Tibial artery (tissue), 4 donors: ENCODE measurements at regions of chr15 and their contacts with region 1.

Region 1: DNA sequence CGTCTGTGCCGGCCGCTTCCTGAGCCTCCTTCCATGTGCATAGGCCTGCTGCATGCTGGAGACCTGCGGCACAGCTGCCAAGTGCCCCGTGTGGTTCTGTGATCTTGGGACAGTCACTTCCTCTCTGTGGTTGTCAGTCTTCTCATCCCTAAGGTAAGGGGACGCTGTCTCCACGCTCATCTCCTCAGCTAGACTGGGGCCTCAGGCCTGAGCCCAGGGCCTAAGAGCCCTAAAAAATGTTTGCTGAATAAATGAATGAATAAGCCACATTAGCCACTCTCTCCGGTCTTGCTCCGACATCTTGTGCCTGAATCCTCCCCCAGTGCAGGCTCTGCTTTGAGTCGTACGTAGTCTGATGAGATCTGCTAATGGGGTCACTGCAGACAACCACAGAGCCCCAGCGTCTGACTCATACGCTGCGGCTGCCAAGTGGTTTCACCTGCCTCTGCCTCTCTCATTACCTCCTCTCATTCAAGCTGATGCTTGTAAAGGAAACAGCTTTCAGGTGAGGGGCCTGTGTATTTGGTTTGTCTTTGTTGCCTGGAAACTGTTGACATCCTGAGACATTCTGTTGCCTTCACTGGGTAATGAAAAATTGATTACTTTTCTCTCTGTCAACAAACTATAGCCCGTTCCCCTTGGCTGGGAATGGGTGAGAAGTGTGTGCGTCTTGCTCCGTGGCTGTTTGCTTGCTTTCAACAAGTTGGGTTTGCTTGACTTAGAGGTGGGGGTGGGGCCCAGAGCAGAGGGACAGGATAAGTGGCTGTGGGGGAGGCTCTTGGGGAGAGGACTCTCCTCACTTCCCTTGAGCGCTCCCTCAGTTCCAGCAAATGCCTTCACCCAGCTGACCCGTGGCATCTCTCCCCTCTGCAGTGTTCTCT is 15.9 kb downstream of the RPLP1 start:
- DNase-seq: peak in 1 of 2 donors; percentile 47
- H3K4me3 ChIP-seq: no peak overlapping the region
- H3K27ac ChIP-seq: no peak overlapping the region
- H3K4me1 ChIP-seq: peaks cover 0 to 3% (median under 1%) of the 10 kb centered on the region in 4 donors
- H3K27me3 ChIP-seq: no peaks in the 10 kb centered on the region
- CTCF ChIP-seq: no peak

Region 2: GRCh38 chr15:69058830-69059556 is 409.5 kb before region 1 on chr15:
- intact Hi-C with region 1: loop called (anchors 5 kb)
- DNase-seq: peak; percentile 81 to 87
- H3K4me3 ChIP-seq: no peak overlapping the region
- H3K27ac ChIP-seq: no peak overlapping the region
- H3K4me1 ChIP-seq: no peaks in the 10 kb centered on the region
- H3K27me3 ChIP-seq: peaks cover 0 to 26% of the 10 kb centered on the region in 2 donors
- CTCF ChIP-seq: peak; percentile 82 to 88